Activated CD8-positive, alpha-beta memory T cell treated with anti-CD3 and anti-CD28 coated beads, Interleukin-2, amount 10 ng/mL, durations not matched to agents 7 days and 5 days (primary cell): ENCODE measurements at regions of chr1 and their contacts with region 1.

Region 1: DNA sequence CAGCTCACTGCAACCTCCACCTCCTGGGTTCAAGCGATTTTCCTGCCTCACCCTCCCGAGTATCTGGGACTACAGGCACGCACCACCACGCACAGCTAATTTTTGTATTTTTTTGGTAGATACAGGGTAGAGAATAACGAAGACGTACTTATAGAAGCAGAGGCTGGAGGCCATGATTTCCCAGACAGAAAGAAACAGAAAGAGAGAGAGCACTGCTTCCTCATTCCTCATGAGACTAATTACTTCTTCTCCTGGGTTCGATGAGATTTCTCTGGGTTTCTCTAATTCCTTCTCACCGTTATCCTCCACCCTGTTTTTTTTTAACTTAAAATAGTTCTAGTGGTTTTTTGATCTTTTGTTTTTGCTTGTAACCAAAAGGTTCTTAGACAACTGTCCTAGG is 23.4 kb upstream of the PTP4A2 start:
- DNase-seq: no peak
- ATAC-seq: no peak
- H3K4me3 Mint-ChIP-seq: no peak overlapping the region
- H3K27ac Mint-ChIP-seq: peak overlapping the region; percentile 78
- H3K4me1 Mint-ChIP-seq: peaks cover 74% of the 10 kb centered on the region
- H3K27me3 Mint-ChIP-seq: peaks cover 3% of the 10 kb centered on the region

Region 2: DNA sequence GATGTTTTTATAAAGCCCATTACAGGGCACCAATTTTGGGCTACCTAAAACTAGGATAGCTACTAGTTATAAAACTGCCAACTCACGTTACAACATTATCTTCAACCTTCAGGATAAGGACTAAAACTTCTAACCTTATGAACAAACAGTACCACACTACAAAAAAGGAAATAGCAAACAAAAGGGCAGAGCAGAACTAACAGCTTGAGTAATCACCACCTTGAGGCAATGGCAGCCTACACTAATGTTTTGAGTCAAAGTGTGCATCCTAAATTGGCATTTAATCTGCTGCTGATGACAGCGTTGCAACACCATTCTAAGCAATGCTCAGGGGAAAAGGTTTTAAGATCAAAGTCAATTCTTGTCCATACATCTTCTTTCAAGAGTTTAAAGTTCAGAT is 50.6 kb before region 1 on chr1:
- CTCF ChIA-PET with region 1: interaction called, 30 read pairs
- DNase-seq: no peak
- ATAC-seq: peak; percentile 69
- H3K4me3 Mint-ChIP-seq: no peak overlapping the region
- H3K27ac Mint-ChIP-seq: peak overlapping the region; percentile 47
- H3K4me1 Mint-ChIP-seq: peaks cover 64% of the 10 kb centered on the region
- H3K27me3 Mint-ChIP-seq: no peaks in the 10 kb centered on the region

Region 3: DNA sequence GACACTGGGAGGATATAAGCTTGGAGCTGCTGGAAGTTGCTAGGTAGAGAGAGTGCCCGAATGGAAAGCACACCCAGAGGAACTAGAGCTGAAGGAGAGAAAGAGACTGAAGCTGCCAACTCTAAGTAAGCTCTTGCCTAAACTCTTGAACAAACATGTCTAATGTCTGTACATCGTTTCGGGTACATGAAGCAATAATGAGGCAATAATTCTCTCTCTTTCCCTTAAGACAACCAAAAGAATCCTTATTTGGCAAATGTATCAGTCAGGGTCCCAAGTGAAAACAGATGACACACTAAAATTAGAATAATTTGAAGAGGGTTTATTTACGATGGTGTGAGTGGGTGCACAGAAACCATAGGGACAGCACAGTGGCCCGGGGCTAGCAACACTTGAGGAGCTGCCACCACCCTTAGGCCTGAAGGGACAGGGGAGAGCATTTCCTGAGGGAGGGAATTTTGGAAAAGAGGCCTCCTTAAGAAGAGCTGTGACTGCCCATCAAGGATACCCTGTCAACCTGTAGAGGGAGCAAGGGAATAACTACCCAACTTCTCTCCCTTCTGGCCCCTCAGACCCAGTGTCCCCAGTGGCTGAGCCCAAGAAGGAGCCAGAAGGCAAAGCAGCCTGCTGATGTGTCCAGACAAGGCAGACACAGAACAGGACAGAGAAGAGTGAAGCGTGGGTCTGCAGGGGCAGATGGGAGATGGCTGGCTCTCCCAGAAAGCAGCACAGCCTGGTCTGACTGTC is 16.0 kb after region 1 on chr1:
- CTCF ChIA-PET with region 1: interaction called, 38 read pairs
- DNase-seq: no peak
- ATAC-seq: no peak
- H3K4me3 Mint-ChIP-seq: no peak overlapping the region
- H3K27ac Mint-ChIP-seq: no peak overlapping the region
- H3K4me1 Mint-ChIP-seq: peaks cover 21% of the 10 kb centered on the region
- H3K27me3 Mint-ChIP-seq: no peaks in the 10 kb centered on the region